Activated B cell treated with CpG ODN at 0.5 μM for 24 hours (primary cell): ENCODE measurements at regions of chr12 and their contacts with region 1.

Region 1: DNA sequence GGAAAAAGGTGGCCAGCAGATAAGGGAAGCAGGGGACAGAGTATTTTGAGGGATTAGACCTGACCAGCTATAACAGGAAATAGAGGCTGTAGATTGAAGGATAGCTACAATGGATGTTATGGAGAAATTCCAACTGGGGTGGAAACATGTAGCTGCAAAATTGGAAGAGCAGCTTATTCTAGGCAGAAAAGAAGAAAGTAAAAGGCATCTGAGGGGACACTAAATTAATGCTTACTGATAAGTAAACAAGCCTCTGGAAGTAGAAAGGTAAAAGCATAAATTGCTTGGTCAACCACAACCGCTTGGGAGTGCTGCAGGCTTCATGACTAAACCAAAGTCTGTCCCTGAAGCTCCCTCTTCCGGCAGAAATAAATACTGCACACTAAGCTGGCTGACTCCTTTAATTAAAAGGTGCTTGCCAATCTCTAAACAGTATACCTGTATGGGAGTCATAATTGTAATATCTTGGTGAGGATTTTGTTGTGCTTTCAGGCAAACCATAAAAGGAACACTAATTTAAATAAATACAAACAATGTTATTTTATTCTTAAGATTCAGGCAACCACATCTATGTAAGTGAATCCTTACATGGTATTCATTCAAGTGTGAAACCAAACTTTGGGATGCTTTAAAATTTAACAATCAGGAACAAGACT is 7.7 kb downstream of the UBC start:
- DNase-seq: peak; percentile 44
- ATAC-seq: peak; percentile 93
- H3K4me3 Mint-ChIP-seq: no peak overlapping the region
- H3K27ac Mint-ChIP-seq: peak overlapping the region; percentile 59
- H3K4me1 Mint-ChIP-seq: peaks cover 42% of the 10 kb centered on the region
- H3K27me3 Mint-ChIP-seq: no peaks in the 10 kb centered on the region
- CTCF ChIP-seq: peak; percentile 90

Region 2: DNA sequence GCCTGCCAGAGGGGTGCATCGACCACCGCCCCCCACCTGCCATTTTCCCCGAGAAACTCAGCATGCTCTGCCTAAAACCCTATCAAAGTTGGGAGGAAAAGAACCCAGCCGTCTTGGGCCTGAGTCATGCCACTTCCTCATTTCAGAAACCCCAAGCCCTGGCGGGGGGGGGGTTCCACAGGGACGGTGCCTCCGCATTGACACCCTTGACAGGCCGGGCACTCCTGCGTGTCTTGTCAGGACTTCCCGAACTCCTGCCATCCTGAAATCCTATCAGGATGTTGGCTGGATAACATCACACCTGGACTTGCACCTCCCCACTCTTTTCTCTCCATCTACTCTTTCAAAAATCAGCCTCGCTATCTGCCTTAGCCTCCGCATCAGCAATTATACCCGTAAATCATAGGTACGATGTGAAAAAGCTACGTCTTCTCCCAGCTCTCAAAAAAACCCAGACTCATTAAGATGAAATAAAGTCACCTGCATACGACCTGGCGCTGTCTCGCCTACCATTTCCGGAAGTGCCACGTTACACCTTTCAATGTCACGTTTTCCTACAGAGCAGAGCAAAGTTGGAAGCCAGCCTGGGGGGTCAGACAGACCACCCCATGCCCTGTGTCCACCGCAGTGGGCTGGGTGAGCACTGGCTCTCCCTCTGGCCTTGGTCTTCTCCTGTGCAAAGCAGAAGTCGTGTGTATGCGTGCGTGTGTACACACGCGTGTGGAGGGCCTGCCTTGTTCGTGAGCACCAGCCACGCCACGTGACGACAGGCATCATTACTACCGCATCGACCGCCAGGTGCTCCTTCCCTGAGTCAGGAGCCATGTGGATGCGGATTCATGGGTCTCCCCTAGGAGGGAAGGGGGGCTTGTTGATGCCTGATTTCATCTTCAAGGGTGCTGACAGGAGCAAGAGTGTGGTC is 515.1 kb before region 1 on chr12:
- CTCF ChIA-PET with region 1: no interaction called
- POLR2A ChIA-PET with region 1: no interaction called
- intact Hi-C with region 1: loop called (anchors 10 kb)
- DNase-seq: peak; percentile 73
- ATAC-seq: peak; percentile 77
- H3K4me3 Mint-ChIP-seq: peak overlapping the region; percentile 83
- H3K27ac Mint-ChIP-seq: peak overlapping the region; percentile 79
- H3K4me1 Mint-ChIP-seq: peaks cover 47% of the 10 kb centered on the region
- H3K27me3 Mint-ChIP-seq: no peaks in the 10 kb centered on the region
- CTCF ChIP-seq: no peak

Region 3: GRCh38 chr12:124863416-124864325 is 43.1 kb before region 1 on chr12 and contains the start of gene SCARB1:
- CTCF ChIA-PET with region 1: interaction called, 7 read pairs
- POLR2A ChIA-PET with region 1: interaction called, 10 read pairs
- intact Hi-C with region 1: no loop called
- DNase-seq: peak; percentile 80
- ATAC-seq: peak; percentile 85
- H3K4me3 Mint-ChIP-seq: peak within 1 kb of the TSS; percentile 83
- H3K27ac Mint-ChIP-seq: peak within 1 kb of the TSS; percentile 91
- H3K4me1 Mint-ChIP-seq: peaks cover 40% of the 10 kb centered on the region
- H3K27me3 Mint-ChIP-seq: no peaks in the 10 kb centered on the region
- CTCF ChIP-seq: no peak
- total RNA-seq, gene SCARB1: 39.3 and 40.8 TPM in 2 replicates

Region 4: GRCh38 chr12:124917135-124917840 is 10.6 kb after region 1 on chr12:
- CTCF ChIA-PET with region 1: interaction called, 70 read pairs
- POLR2A ChIA-PET with region 1: interaction called, 34 read pairs
- intact Hi-C with region 1: no loop called
- DNase-seq: peak; percentile 77
- ATAC-seq: peak; percentile 63
- H3K4me3 Mint-ChIP-seq: peak overlapping the region; percentile 100
- H3K27ac Mint-ChIP-seq: peak overlapping the region; percentile 100
- H3K4me1 Mint-ChIP-seq: peaks cover 91% of the 10 kb centered on the region
- H3K27me3 Mint-ChIP-seq: no peaks in the 10 kb centered on the region
- CTCF ChIP-seq: no peak

Region 5: DNA sequence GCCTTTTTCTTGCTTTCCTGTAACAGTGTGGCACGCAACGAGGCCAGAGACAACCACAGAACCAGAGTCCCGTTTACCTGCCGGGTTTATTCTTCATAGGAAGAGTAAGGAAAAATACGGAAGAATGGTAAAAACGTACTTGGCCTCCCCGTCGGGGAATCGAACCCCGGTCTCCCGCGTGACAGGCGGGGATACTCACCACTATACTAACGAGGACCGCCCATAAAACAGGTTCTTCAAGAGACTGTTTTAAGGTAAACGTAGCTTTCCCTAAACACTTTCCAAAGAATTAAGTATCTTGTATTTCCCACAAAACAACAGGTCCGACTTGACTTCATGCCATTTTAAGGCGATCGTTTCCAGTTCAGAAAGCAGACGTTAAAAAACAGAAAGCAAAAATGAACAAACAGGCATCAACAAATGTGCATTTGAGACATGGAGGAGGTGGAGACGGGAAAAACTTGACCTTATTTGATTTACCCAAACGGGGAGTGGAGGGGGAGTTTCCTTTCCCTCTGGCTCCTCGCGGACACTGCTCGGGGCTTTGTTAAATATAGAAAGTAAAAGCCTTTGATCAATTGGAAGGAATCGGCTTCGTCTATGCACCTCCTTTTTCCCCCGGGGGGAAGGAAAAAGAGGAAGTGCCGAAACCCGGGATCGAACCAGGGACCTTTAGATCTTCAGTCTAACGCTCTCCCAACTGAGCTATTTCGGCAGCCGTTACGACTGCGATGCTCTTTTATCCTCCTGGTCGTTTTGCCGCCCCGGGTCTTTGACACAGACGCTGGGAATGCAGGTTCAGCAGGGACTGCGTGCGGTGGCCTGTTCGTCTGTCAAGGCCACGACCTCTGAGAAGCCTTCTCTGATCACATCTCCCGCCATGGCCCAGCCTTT is 20.7 kb after region 1 on chr12:
- CTCF ChIA-PET with region 1: interaction called, 70 read pairs
- POLR2A ChIA-PET with region 1: interaction called, 590 read pairs
- intact Hi-C with region 1: no loop called
- DNase-seq: peak; percentile 91
- ATAC-seq: peak; percentile 84
- H3K4me3 Mint-ChIP-seq: peak overlapping the region; percentile 88
- H3K27ac Mint-ChIP-seq: peak overlapping the region; percentile 98
- H3K4me1 Mint-ChIP-seq: peaks cover 32% of the 10 kb centered on the region
- H3K27me3 Mint-ChIP-seq: peaks cover 6% of the 10 kb centered on the region
- CTCF ChIP-seq: no peak

Region 6: DNA sequence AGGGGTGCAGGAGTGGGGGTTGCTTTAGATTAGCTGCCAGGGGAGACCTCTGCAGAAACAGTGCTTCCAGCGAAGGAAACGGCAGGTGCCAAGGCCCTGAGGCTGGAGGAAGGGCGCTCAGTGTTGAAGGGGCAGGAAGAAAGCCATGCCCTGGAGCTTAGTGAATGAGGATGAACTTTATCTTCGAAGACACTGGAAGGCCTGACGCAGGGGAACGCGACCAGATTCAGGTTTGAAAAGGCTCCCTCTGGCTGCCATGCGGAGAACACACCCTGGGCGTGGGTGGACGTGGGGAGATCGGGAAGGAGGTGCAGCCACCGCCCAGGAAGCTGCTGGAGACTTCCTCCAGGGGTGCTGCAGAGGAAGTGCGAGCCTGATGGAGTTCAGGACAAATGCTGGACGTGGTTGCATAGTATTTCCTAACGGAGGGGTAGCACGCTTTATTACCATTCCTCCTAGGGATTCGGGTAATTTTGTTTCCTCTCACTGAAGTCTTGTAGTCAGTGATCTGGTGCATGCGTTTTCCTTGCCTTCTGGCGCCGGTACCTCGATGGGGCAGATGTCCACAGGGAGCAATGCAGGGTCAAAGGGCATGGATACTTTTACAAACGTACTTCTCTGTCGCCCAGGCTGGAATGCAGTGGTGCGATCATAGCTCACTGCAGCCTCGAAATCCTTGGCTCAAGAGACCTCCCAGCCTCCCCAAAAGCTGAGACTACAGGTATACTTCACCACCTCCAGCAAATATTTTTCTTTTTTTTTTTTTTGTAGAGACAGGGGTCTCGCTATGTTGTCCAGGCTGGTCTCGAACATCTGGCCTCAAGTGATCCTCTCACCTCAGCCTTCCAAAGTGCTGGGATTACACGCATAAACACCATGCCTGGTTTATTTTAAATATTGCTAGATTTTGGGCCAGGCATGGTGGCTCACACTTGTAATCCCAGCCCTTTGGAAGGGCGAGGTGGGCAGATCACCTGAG is 34.1 kb after region 1 on chr12:
- CTCF ChIA-PET with region 1: interaction called, 162 read pairs
- POLR2A ChIA-PET with region 1: interaction called, 590 read pairs
- intact Hi-C with region 1: loop called (anchors 1 kb)
- DNase-seq: peak; percentile 62
- ATAC-seq: peak; percentile 60
- H3K4me3 Mint-ChIP-seq: no peak overlapping the region
- H3K27ac Mint-ChIP-seq: no peak overlapping the region
- H3K4me1 Mint-ChIP-seq: peaks cover 15% of the 10 kb centered on the region
- H3K27me3 Mint-ChIP-seq: no peaks in the 10 kb centered on the region
- CTCF ChIP-seq: no peak

Region 7: DNA sequence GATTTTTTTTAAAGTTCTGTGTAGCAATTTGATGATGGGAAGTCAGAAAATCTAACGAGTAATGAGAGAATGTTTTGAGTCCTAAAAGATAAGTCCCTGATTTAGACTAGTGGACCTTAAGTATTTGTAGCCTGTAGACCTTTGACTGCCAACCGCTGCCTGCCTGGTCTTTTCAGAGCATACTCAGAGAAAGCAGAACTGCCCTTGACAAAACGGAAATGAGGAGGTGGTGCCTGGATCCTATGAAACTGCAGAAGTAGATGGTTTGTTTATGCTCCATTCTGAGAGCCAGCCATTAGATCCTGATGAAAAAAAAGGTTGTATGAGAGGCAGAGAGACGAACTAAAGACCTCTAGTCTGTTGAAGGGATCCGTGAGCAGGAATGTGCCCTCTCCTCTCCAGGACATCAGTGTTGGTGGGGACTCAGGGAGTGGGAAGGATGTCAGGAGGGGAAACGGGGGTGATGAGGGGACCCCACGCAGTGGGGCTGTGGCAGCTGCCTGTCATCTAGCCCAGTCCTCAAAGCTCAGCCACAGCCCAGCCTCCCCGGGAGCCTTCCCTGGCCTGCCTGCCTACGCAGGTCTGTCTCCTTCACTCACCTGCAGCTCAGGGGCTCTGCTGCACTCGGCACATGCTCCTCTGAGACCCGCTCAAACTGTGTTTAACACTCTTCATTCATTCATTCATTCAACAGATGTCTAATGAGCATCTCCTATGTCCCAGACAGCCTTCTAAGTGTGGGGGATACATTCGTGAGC is 606.0 kb after region 1 on chr12:
- CTCF ChIA-PET with region 1: no interaction called
- POLR2A ChIA-PET with region 1: no interaction called
- intact Hi-C with region 1: no loop called
- DNase-seq: no peak
- ATAC-seq: no peak
- H3K4me3 Mint-ChIP-seq: no peak overlapping the region
- H3K27ac Mint-ChIP-seq: no peak overlapping the region
- H3K4me1 Mint-ChIP-seq: peaks cover 2% of the 10 kb centered on the region
- H3K27me3 Mint-ChIP-seq: no peaks in the 10 kb centered on the region
- CTCF ChIP-seq: no peak